ENCODE measurements at regions of chr16 and their contacts with region 1.

Region 1: GRCh38 chr16:21656795-21657768 is 4.7 kb upstream of the IGSF6 start:
- DNase-seq: peak in 7 of 9 donors; percentile 50 to 71 (median 66)
- ATAC-seq: peak; percentile 72
- H3K4me3 ChIP-seq: no peak overlapping the region
- H3K4me3 Mint-ChIP-seq: peak overlapping the region in 5 of 10 donors; percentile 7 to 48 (median 33)
- H3K27ac ChIP-seq: no peak overlapping the region
- H3K27ac Mint-ChIP-seq: peak overlapping the region in 8 of 9 donors; percentile 5 to 87 (median 26)
- H3K4me1 ChIP-seq: peaks cover 16 to 24% of the 10 kb centered on the region in 2 donors
- H3K4me1 Mint-ChIP-seq: peaks cover 20 to 45% (median 37%) of the 10 kb centered on the region in 7 donors
- H3K27me3 ChIP-seq: no peaks in the 10 kb centered on the region
- H3K27me3 Mint-ChIP-seq: no peaks in the 10 kb centered on the region

Region 2: GRCh38 chr16:21167360-21167759 is 489.7 kb before region 1 on chr16:
- CTCF ChIA-PET with region 1: no interaction called
- POLR2A ChIA-PET with region 1: no interaction called
- intact Hi-C with region 1: no loop called
- DNase-seq: no peak
- ATAC-seq: no peak
- H3K4me3 ChIP-seq: no peak overlapping the region
- H3K4me3 Mint-ChIP-seq: no peak overlapping the region
- H3K27ac ChIP-seq: no peak overlapping the region
- H3K27ac Mint-ChIP-seq: peak overlapping the region in 2 of 9 donors; percentile 1 to 44
- H3K4me1 ChIP-seq: no peaks in the 10 kb centered on the region
- H3K4me1 Mint-ChIP-seq: peaks cover 0 to 15% (median 2%) of the 10 kb centered on the region in 7 donors
- H3K27me3 ChIP-seq: no peaks in the 10 kb centered on the region
- H3K27me3 Mint-ChIP-seq: no peaks in the 10 kb centered on the region

Region 3: GRCh38 chr16:21698169-21699032 is 41.3 kb after region 1 on chr16:
- CTCF ChIA-PET with region 1: interaction called, 16 read pairs
- POLR2A ChIA-PET with region 1: no interaction called
- intact Hi-C with region 1: loop called in 1 of 2 experiments (anchors 2 kb)
- DNase-seq: no peak
- ATAC-seq: no peak
- H3K4me3 ChIP-seq: no peak overlapping the region
- H3K4me3 Mint-ChIP-seq: no peak overlapping the region
- H3K27ac ChIP-seq: no peak overlapping the region
- H3K27ac Mint-ChIP-seq: no peak overlapping the region
- H3K4me1 ChIP-seq: no peaks in the 10 kb centered on the region
- H3K4me1 Mint-ChIP-seq: no peaks in the 10 kb centered on the region
- H3K27me3 ChIP-seq: no peaks in the 10 kb centered on the region
- H3K27me3 Mint-ChIP-seq: peaks cover 0 to 7% (median 0%) of the 10 kb centered on the region in 5 donors

Region 4: GRCh38 chr16:21708533-21709115 is 51.5 kb after region 1 on chr16:
- CTCF ChIA-PET with region 1: interaction called, 61 read pairs
- POLR2A ChIA-PET with region 1: interaction called, 7 read pairs
- intact Hi-C with region 1: loop called (anchors 1 to 5 kb)
- DNase-seq: peak; percentile 51 to 87 (median 79)
- ATAC-seq: peak; percentile 86
- H3K4me3 ChIP-seq: no peak overlapping the region
- H3K4me3 Mint-ChIP-seq: no peak overlapping the region
- H3K27ac ChIP-seq: no peak overlapping the region
- H3K27ac Mint-ChIP-seq: peak overlapping the region in 2 of 9 donors; percentile 53 to 59
- H3K4me1 ChIP-seq: peaks cover 0 to 3% of the 10 kb centered on the region in 2 donors
- H3K4me1 Mint-ChIP-seq: peaks cover 0 to 4% (median 3%) of the 10 kb centered on the region in 7 donors
- H3K27me3 ChIP-seq: no peaks in the 10 kb centered on the region
- H3K27me3 Mint-ChIP-seq: no peaks in the 10 kb centered on the region